B cell (primary cell): ENCODE measurements at regions of chr2 and their contacts with region 1.

Region 1: GRCh38 chr2:224585205-224586088 is at the start of gene CUL3:
- DNase-seq: peak; percentile 99
- ATAC-seq: peak; percentile 87
- H3K4me3 ChIP-seq: peak within 1 kb of the TSS; percentile 79 to 95 (median 84)
- H3K4me3 Mint-ChIP-seq: peak within 1 kb of the TSS; percentile 98
- H3K27ac ChIP-seq: peak within 1 kb of the TSS; percentile 83
- H3K27ac Mint-ChIP-seq: peak within 1 kb of the TSS; percentile 96
- H3K4me1 ChIP-seq: peaks cover 31 to 40% of the 10 kb centered on the region in 2 donors
- H3K4me1 Mint-ChIP-seq: peaks cover 45% of the 10 kb centered on the region
- H3K27me3 ChIP-seq: no peaks in the 10 kb centered on the region
- H3K27me3 Mint-ChIP-seq: no peaks in the 10 kb centered on the region
- CTCF ChIP-seq: no peak
- total RNA-seq, gene CUL3: 138 and 142 TPM in 2 replicates

Region 2: DNA sequence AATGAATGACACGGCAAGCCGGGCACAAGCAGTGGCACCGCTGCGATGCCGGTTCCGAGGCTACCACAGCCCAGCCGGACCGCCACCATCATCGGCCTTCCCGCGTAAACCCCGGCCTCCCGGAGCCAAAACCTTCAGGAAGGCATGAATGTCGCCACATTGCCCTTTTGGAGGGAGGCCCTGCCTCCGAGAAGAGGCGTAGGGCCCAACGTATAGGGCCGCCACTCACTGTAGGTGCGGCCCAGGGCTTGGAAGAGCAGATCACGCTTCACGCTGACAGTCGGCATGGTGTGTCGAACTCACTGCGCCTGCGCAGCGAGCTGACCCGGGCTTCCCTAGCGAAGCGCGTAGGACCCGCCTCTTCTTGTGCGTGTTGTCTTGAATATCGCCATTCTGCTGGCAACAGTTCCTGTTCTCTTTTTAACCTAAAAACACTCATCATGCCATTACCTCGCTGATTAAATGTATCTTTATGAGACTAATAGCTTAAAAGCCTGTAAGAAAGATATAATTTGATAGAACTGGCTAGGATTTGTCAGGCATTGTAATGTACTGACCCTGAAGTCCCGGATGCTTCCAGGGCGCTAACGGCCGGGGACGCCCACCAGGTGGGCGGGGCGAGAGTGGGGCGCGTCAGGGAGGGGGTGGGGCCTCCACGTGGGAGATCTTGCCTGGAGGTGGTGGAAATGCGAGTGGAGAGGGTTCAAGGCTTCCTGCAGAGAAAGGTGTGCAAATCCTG is 1929.5 kb before region 1 on chr2 and contains the start of gene FARSB:
- CTCF ChIA-PET with region 1: no interaction called
- POLR2A ChIA-PET with region 1: no interaction called
- intact Hi-C with region 1: loop called (anchors 10 kb)
- DNase-seq: peak; percentile 98
- ATAC-seq: peak; percentile 93
- H3K4me3 ChIP-seq: peak within 1 kb of the TSS; percentile 72 to 95 (median 93)
- H3K4me3 Mint-ChIP-seq: peak within 1 kb of the TSS; percentile 99
- H3K27ac ChIP-seq: peak within 1 kb of the TSS; percentile 98
- H3K27ac Mint-ChIP-seq: peak within 1 kb of the TSS; percentile 100
- H3K4me1 ChIP-seq: peaks cover 21 to 26% of the 10 kb centered on the region in 2 donors
- H3K4me1 Mint-ChIP-seq: peaks cover 39% of the 10 kb centered on the region
- H3K27me3 ChIP-seq: no peaks in the 10 kb centered on the region
- H3K27me3 Mint-ChIP-seq: no peaks in the 10 kb centered on the region
- CTCF ChIP-seq: no peak
- total RNA-seq, gene FARSB: 9.9 and 10.2 TPM in 2 replicates

Region 3: DNA sequence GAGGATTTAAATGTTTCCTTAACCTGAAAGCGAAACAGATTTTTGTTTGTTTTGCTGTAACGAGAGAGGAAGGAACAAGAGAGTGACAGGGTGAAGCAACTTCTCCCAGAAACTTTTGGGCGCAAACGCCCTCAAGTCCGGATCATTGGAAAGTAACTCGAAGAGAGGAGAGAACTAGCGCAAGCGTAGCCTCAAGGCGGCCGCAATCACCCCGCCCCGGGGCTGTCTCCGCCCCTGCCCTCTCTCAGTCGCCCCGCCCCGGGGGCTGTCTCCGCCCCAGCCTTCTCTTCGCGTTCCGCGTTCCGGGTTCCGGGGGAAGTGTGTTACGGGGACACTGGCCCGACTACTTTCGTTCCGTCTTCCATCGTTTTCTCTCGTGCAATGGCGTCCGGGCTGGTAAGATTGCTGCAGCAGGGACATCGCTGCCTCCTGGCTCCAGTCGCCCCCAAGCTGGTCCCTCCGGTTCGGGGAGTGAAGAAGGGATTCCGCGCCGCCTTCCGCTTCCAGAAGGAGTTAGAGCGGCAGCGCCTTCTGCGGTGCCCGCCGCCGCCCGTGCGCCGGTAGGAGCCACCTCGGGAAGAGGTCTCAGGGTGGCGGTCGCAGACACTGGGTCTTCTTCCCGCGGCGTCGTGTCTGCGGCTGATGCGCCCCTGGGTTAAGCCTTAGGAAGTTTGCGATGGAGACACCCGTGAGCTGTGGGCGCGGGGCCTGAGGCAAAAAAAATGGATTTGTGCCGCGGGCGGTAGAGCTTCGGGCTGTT is 628.2 kb before region 1 on chr2 and contains the start of gene MRPL44:
- CTCF ChIA-PET with region 1: no interaction called
- POLR2A ChIA-PET with region 1: no interaction called
- intact Hi-C with region 1: loop called (anchors 5 kb)
- DNase-seq: peak; percentile 96
- ATAC-seq: peak; percentile 99
- H3K4me3 ChIP-seq: peak within 1 kb of the TSS; percentile 66 to 94 (median 86)
- H3K4me3 Mint-ChIP-seq: peak within 1 kb of the TSS; percentile 94
- H3K27ac ChIP-seq: peak within 1 kb of the TSS; percentile 72 to 78
- H3K27ac Mint-ChIP-seq: peak within 1 kb of the TSS; percentile 97
- H3K4me1 ChIP-seq: peaks cover 48 to 52% of the 10 kb centered on the region in 2 donors
- H3K4me1 Mint-ChIP-seq: peaks cover 67% of the 10 kb centered on the region
- H3K27me3 ChIP-seq: no peaks in the 10 kb centered on the region
- H3K27me3 Mint-ChIP-seq: no peaks in the 10 kb centered on the region
- CTCF ChIP-seq: no peak
- total RNA-seq, gene MRPL44: 23.4 and 26.7 TPM in 2 replicates

Region 4: GRCh38 chr2:224025874-224026273 is 559.6 kb before region 1 on chr2:
- CTCF ChIA-PET with region 1: no interaction called
- POLR2A ChIA-PET with region 1: no interaction called
- intact Hi-C with region 1: loop called (anchors 5 kb)
- DNase-seq: peak; percentile 90
- ATAC-seq: peak; percentile 97
- H3K4me3 ChIP-seq: peak overlapping the region in 2 of 5 experiments; percentile 2 to 40
- H3K4me3 Mint-ChIP-seq: peak overlapping the region; percentile 57
- H3K27ac ChIP-seq: peak overlapping the region; percentile 43 to 44
- H3K27ac Mint-ChIP-seq: peak overlapping the region; percentile 74
- H3K4me1 ChIP-seq: peaks cover 36% of the 10 kb centered on the region in 2 donors
- H3K4me1 Mint-ChIP-seq: peaks cover 40% of the 10 kb centered on the region
- H3K27me3 ChIP-seq: no peaks in the 10 kb centered on the region
- H3K27me3 Mint-ChIP-seq: no peaks in the 10 kb centered on the region
- CTCF ChIP-seq: no peak

Region 5: GRCh38 chr2:224520064-224520463 is 65.4 kb before region 1 on chr2:
- CTCF ChIA-PET with region 1: interaction called, 13 read pairs
- POLR2A ChIA-PET with region 1: interaction called, 29 read pairs
- intact Hi-C with region 1: loop called (anchors 2 kb)
- DNase-seq: peak; percentile 33
- ATAC-seq: no peak
- H3K4me3 ChIP-seq: peak overlapping the region in 1 of 5 experiments; percentile 81
- H3K4me3 Mint-ChIP-seq: peak overlapping the region; percentile 81
- H3K27ac ChIP-seq: peak overlapping the region; percentile 87 to 89
- H3K27ac Mint-ChIP-seq: peak overlapping the region; percentile 91
- H3K4me1 ChIP-seq: peaks cover 73 to 78% of the 10 kb centered on the region in 2 donors
- H3K4me1 Mint-ChIP-seq: peaks cover 70% of the 10 kb centered on the region
- H3K27me3 ChIP-seq: no peaks in the 10 kb centered on the region
- H3K27me3 Mint-ChIP-seq: no peaks in the 10 kb centered on the region
- CTCF ChIP-seq: no peak

Region 6: GRCh38 chr2:224601923-224602322 is 16.5 kb after region 1 on chr2:
- CTCF ChIA-PET with region 1: interaction called, 3 read pairs
- POLR2A ChIA-PET with region 1: interaction called, 4 read pairs
- intact Hi-C with region 1: loop called (anchors 2 kb)
- DNase-seq: no peak
- ATAC-seq: no peak
- H3K4me3 ChIP-seq: no peak overlapping the region
- H3K4me3 Mint-ChIP-seq: no peak overlapping the region
- H3K27ac ChIP-seq: no peak overlapping the region
- H3K27ac Mint-ChIP-seq: no peak overlapping the region
- H3K4me1 ChIP-seq: peaks cover 0 to 4% of the 10 kb centered on the region in 2 donors
- H3K4me1 Mint-ChIP-seq: peaks cover 9% of the 10 kb centered on the region
- H3K27me3 ChIP-seq: no peaks in the 10 kb centered on the region
- H3K27me3 Mint-ChIP-seq: no peaks in the 10 kb centered on the region
- CTCF ChIP-seq: no peak

Region 7: DNA sequence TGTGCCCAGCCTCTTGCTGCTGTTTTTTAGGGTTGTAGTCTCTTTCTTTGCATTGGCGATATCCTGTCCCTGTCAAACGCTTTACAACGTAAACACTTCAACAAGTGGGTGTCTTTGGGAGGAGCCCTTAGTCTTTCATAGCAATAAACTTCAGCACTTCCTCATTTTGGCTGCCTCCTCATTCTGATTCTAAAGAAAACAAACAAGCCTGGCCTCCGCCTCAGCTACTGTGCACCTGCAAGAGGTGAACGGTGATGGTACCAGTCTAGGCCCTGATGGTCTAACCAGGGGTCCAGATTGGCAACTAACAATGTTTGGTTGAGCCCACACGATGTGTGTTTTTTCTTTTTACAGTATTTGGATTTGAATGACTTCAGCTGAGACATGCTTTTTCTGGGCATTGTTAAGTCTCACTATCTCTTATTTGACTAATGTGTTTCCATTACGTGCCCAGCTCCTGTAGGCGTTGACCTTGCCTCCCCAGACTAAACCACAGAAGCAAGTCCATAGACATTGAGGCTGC is 52.9 kb after region 1 on chr2:
- CTCF ChIA-PET with region 1: no interaction called
- POLR2A ChIA-PET with region 1: interaction called, 10 read pairs
- intact Hi-C with region 1: loop called (anchors 1 kb)
- DNase-seq: peak; percentile 75
- ATAC-seq: peak; percentile 89
- H3K4me3 ChIP-seq: peak overlapping the region in 3 of 5 experiments; percentile 1 to 38 (median 20)
- H3K4me3 Mint-ChIP-seq: peak overlapping the region; percentile 80
- H3K27ac ChIP-seq: peak overlapping the region; percentile 75 to 79
- H3K27ac Mint-ChIP-seq: peak overlapping the region; percentile 100
- H3K4me1 ChIP-seq: peaks cover 14 to 25% of the 10 kb centered on the region in 2 donors
- H3K4me1 Mint-ChIP-seq: peaks cover 16% of the 10 kb centered on the region
- H3K27me3 ChIP-seq: no peaks in the 10 kb centered on the region
- H3K27me3 Mint-ChIP-seq: no peaks in the 10 kb centered on the region
- CTCF ChIP-seq: no peak